A549 (cell line): ENCODE measurements at regions of chr2 and their contacts with region 1.

Region 1: GRCh38 chr2:231191896-231192872 is 6.2 kb upstream of the ARMC9 start:
- DNase-seq: peak; percentile 40 to 60
- ATAC-seq: peak; percentile 83 to 94
- H3K4me3 ChIP-seq: no peak overlapping the region
- H3K27ac ChIP-seq: 0 out of 6 replicates have a peak overlapping the region, but pooled peaks of 1 of the 2 experiments have one; percentile 24
- H3K4me1 ChIP-seq: no peaks in the 10 kb centered on the region
- CTCF ChIP-seq: peak; percentile 41; the same call in 2 of the 3 replicates
- EP300 ChIP-seq: no peak
- POLR2A ChIP-seq: no peak
- RAD21 ChIP-seq: peak; percentile 44 to 64; a peak in 4 of 5 replicates

Region 2: DNA sequence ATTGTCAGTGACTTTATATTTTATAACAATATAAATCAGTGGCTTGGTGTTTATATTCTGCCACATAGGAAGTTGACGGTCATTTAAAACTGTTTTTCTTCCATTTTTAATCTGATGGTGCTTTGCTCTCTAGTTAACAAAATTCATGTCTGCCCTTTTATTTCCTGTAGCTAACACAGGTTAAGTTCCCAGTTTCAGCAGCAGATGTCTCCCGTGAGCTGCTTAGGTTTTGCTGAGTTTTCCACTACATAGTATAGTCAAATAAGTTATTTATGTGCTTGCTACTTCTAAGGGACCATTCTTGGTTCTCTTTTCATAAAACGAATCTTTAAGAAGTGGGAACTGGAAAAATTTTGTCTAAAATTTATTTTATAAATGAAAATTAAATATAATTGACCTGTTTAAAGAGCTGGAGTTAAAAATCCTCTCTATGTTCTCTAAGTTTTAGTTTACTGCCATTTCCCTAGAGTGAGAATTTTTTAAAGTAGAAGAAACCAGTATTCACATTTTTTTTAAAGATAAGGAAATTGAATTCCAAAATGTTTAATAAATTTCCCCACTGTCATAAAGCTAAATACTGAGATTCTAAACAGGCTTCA is 88.0 kb before region 1 on chr2:
- CTCF ChIA-PET with region 1: interaction called, 39 read pairs
- POLR2A ChIA-PET with region 1: interaction called, 4 read pairs
- DNase-seq: peak; percentile 21 to 55
- ATAC-seq: peak; percentile 84 to 89; a peak in 5 of 6 replicates
- H3K4me3 ChIP-seq: no peak overlapping the region
- H3K27ac ChIP-seq: no peak overlapping the region
- H3K4me1 ChIP-seq: peaks cover 42% of the 10 kb centered on the region
- CTCF ChIP-seq: peak; percentile 90
- EP300 ChIP-seq: no peak
- POLR2A ChIP-seq: no peak
- RAD21 ChIP-seq: peak; percentile 76 to 77

Region 3: GRCh38 chr2:231297108-231297908 is 105.1 kb after region 1 on chr2:
- CTCF ChIA-PET with region 1: no interaction called
- POLR2A ChIA-PET with region 1: no interaction called
- DNase-seq: peak; percentile 71 to 84
- ATAC-seq: peak; percentile 92
- H3K4me3 ChIP-seq: no peak overlapping the region
- H3K27ac ChIP-seq: no peak overlapping the region
- H3K4me1 ChIP-seq: peaks cover 25% of the 10 kb centered on the region
- CTCF ChIP-seq: peak; percentile 79
- EP300 ChIP-seq: no peak
- POLR2A ChIP-seq: no peak
- RAD21 ChIP-seq: peak; percentile 77 to 78